ENCODE measurements at regions of chr6 and their contacts with region 1.

Region 1: GRCh38 chr6:30489081-30490025 is at the start of gene HLA-E:
- DNase-seq: peak; percentile 81
- ATAC-seq: peak; percentile 80
- H3K4me3 Mint-ChIP-seq: peak within 1 kb of the TSS; percentile 99
- H3K27ac Mint-ChIP-seq: peak within 1 kb of the TSS; percentile 99
- H3K4me1 Mint-ChIP-seq: peaks cover 41% of the 10 kb centered on the region
- H3K27me3 Mint-ChIP-seq: no peaks in the 10 kb centered on the region
- total RNA-seq, gene HLA-E: 957 to 962 TPM

Region 2: GRCh38 chr6:30411515-30412207 is 77.7 kb before region 1 on chr6:
- POLR2A ChIA-PET with region 1: no interaction called
- DNase-seq: peak; percentile 65
- ATAC-seq: peak; percentile 39
- H3K4me3 Mint-ChIP-seq: no peak overlapping the region
- H3K27ac Mint-ChIP-seq: no peak overlapping the region
- H3K4me1 Mint-ChIP-seq: peaks cover 5% of the 10 kb centered on the region
- H3K27me3 Mint-ChIP-seq: peaks cover 64% of the 10 kb centered on the region

Region 3: DNA sequence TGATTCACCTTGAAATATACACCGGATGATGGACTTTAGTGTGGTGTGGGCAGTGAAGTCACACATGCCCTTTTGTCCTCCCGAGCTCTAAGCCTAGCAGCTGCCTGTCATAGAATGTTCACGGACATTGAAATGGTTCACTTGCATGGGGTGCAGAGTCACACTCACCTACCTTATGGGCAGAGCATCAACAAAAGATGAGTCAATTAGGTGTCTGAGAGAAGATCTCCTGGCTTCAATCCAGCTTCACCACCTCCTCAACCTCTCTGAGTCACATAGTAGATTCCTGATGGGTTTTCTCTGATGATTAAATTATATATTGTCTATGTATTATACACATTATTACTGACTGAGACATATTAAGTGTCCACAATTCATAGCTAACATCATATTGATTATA is 48.2 kb before region 1 on chr6:
- POLR2A ChIA-PET with region 1: no interaction called
- DNase-seq: no peak
- ATAC-seq: no peak
- H3K4me3 Mint-ChIP-seq: no peak overlapping the region
- H3K27ac Mint-ChIP-seq: no peak overlapping the region
- H3K4me1 Mint-ChIP-seq: no peaks in the 10 kb centered on the region
- H3K27me3 Mint-ChIP-seq: peaks cover 93% of the 10 kb centered on the region

Region 4: DNA sequence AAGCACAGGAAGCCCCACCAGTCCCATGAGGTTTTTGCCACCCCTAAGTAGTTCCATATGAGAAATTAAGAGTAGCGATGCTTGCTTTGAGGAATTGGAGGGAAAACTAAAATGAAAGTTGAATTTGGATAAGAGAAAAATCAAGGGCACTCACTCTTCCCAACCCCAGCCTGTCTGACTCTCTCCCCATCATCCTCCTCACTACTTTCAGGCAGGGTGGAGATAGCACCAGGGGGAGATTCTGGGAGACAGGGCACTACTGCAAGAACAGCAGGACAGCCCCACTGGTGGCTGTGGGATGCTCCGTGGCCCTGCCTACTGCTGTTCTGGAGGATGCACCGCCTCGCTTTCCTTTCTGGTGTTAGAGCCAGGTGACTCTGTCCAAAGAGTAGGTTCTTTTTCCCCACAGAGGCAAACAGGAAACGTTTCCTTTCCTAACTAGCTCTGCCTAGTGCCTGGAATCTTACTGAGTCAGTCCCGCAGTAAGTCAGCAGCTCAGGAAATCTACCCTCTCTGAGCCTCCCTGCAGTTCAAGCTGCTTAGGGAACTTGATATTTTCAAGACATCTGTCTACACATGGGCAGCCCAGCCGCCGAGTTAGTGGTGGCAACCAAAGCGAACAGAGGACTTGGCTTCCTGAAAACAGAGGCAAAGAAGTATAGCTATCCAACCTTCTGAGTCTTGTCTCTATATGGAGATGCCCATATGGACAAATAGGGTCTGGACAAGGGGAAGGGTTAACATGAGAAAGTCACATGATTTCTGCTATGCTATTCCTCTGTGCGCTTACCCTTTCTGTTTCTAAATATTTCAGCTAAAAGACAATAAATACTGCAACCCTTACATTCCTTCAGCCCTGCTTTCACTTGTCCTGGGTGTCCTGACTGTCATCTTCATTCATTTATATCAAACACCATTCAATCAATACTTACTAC is 11.3 kb after region 1 on chr6:
- POLR2A ChIA-PET with region 1: interaction called, 40 read pairs
- DNase-seq: no peak
- ATAC-seq: peak; percentile 59
- H3K4me3 Mint-ChIP-seq: peak overlapping the region; percentile 79
- H3K27ac Mint-ChIP-seq: peak overlapping the region; percentile 82
- H3K4me1 Mint-ChIP-seq: peaks cover 26% of the 10 kb centered on the region
- H3K27me3 Mint-ChIP-seq: no peaks in the 10 kb centered on the region

Region 5: GRCh38 chr6:30508890-30509736 is 19.8 kb after region 1 on chr6:
- POLR2A ChIA-PET with region 1: interaction called, 286 read pairs
- DNase-seq: peak; percentile 45
- ATAC-seq: peak; percentile 62
- H3K4me3 Mint-ChIP-seq: peak overlapping the region; percentile 76
- H3K27ac Mint-ChIP-seq: peak overlapping the region; percentile 89
- H3K4me1 Mint-ChIP-seq: peaks cover 47% of the 10 kb centered on the region
- H3K27me3 Mint-ChIP-seq: no peaks in the 10 kb centered on the region

Region 6: DNA sequence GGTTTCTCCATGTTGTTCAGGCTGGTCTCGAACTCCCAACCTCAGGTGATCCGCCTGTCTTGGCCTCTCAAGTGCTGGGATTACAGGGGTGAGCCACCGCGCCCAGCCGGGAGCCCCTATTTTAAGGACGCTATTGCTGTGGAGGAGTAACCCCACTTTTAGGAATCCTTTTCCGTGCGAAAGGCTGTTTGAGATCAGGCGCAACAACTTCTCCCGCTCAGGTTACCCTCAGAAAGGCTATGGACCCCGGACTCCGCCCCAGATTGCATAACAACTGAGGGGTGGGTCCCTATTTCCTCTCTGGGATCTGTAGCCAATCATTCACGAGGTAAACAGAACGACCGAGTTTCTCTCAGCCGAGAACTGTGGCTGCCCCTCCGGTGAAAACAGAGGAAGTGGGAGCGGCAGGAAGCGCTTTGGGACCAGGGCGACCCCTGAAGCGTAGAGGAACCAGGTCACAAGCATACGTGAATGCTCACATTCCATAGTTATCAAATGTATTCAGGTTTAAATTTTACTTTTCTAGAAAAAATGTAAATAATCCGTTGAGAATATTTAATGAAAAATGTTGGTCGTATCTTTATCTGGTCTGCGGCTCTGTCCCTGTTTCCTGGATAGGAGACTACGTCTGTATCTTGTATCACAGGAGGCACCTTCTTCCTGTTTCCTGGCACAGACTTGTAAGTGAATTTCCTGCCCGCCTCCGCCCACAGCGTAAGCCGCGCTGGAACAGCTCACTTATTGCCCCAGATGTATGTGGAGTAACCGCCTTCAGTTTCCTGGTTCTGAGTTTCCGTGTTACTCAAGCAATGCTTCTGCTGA is 26.8 kb after region 1 on chr6:
- POLR2A ChIA-PET with region 1: interaction called, 286 read pairs
- DNase-seq: peak; percentile 82
- ATAC-seq: peak; percentile 92
- H3K4me3 Mint-ChIP-seq: peak overlapping the region; percentile 89
- H3K27ac Mint-ChIP-seq: peak overlapping the region; percentile 95
- H3K4me1 Mint-ChIP-seq: peaks cover 34% of the 10 kb centered on the region
- H3K27me3 Mint-ChIP-seq: no peaks in the 10 kb centered on the region

Region 7: DNA sequence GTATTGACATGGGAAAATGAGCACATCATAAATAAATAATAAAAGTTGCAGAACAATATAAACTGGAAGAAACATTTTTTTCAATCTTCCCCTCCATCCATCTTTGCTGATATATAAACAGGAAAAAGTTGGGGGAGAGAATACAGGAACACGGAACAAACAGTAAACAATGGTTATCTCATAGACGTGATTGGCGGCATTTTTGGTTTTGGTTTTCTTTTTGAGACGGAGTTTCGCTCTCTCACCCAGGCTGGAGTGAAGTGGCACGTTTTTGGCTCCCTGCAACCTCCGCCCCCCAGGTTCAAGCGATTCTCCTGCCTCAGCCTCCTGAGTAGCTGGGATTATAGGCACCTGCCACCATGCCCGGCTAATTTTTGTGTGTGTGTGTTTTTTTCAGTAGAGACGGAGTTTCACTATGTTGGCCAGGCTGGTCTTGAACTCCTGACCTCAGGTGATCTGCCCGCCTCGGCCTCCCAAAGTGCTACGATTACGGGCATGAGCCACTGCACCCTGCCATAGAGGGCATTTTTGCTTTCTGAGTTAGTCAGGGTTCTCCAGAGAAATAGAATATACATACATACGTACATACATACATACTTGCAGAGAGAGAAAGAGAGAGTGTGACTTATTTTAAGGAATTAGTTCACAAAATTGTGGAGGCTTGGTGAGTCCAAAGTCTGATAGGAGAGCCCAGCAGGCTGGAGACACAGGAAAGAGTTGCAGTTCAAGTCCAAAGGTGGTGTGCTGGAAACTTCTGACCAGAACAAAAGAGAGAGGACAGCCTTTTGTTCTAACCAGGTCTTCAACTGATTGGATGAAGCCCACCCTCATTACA is 44.3 kb after region 1 on chr6:
- POLR2A ChIA-PET with region 1: interaction called, 124 read pairs
- DNase-seq: no peak
- ATAC-seq: no peak
- H3K4me3 Mint-ChIP-seq: no peak overlapping the region
- H3K27ac Mint-ChIP-seq: no peak overlapping the region
- H3K4me1 Mint-ChIP-seq: peaks cover 11% of the 10 kb centered on the region
- H3K27me3 Mint-ChIP-seq: no peaks in the 10 kb centered on the region

Region 8: GRCh38 chr6:30541515-30542403 is 52.4 kb after region 1 on chr6:
- POLR2A ChIA-PET with region 1: interaction called, 54 read pairs
- DNase-seq: peak; percentile 82
- ATAC-seq: peak; percentile 71
- H3K4me3 Mint-ChIP-seq: peak overlapping the region; percentile 74
- H3K27ac Mint-ChIP-seq: peak overlapping the region; percentile 71
- H3K4me1 Mint-ChIP-seq: peaks cover 28% of the 10 kb centered on the region
- H3K27me3 Mint-ChIP-seq: no peaks in the 10 kb centered on the region

Region 9: DNA sequence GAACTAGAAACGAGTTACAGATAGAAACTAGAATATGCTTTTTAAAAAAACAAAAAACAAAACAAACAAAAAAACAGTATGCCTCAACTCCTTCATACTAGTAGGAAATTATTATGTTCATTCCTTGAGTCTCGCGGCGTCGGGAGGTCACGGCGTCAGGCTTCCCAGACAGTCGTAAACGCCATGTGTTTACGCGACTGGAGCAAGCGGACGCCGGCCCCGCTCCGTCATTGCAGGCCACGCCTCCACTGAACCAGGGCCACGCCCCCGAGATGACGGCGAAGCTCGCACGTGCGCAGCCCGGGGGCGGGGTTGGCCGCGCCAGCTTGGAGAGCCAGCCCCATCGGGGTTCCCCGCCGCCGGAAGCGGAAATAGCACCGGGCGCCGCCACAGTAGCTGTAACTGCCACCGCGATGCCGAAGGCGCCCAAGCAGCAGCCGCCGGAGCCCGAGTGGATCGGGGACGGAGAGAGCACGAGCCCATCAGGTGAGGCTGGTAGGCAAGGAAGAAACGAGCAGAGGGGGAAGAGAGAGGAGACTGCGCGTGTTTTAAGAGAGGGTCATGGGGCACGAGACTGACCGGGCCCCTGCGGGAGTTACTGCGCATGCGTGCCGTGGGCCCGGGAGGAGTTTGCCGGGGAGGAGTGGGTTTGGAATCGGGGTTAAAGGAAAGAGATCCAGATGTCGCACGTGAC is 81.9 kb after region 1 on chr6 and contains the start of gene ABCF1:
- POLR2A ChIA-PET with region 1: interaction called, 10 read pairs
- DNase-seq: peak; percentile 100
- ATAC-seq: peak; percentile 91
- H3K4me3 Mint-ChIP-seq: peak within 1 kb of the TSS; percentile 98
- H3K27ac Mint-ChIP-seq: peak within 1 kb of the TSS; percentile 96
- H3K4me1 Mint-ChIP-seq: peaks cover 46% of the 10 kb centered on the region
- H3K27me3 Mint-ChIP-seq: peaks cover 2% of the 10 kb centered on the region
- total RNA-seq, gene ABCF1: 67.5 to 70.4 TPM